ENCODE measurements at regions of chr12 and their contacts with region 1.

Region 1: GRCh38 chr12:31528095-31528494 is 62.8 kb downstream of the DENND5B start:
- DNase-seq: no peak
- ATAC-seq: no peak
- H3K4me3 ChIP-seq: no peak overlapping the region
- H3K27ac ChIP-seq: no peak overlapping the region
- H3K4me1 ChIP-seq: peaks cover 20 to 47% of the 10 kb centered on the region in 2 experiments
- H3K27me3 ChIP-seq: no peaks in the 10 kb centered on the region
- CTCF ChIP-seq: no peak
- POLR2A ChIP-seq: no peak
- RAD21 ChIP-seq: no peak

Region 2: DNA sequence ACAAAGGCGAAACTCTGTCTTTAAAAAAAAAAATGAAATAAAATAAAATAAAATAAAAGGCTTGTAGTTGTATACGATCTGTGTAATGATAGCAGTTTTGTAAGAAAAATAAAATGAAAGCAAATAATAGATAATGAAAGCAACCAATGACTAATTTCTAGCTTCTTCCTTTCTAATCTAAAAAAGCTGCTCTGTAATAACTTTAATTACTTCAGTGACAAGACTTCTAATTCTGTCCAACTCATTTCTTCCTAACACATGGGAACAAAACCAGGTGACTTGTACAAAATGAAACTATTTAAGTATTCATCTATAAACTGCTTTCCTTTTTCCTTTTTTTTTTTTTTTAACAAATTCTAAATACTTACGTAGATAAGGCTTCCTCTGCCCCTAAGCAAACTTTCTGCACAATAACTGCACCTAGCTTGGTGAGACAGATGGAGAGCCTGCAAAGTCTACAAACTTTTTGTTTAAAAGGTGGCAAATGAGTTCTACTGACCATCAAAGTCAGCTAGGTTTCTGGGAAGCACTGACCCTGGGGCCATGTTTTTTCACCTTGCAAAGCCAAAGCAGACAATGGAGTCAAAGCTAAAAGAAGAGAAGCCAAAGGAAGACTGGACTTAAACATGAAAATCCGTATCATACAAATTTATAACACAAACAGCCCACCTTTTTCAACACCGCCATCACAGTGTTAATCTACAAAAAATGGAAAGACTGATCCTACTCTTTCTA is 34.7 kb after region 1 on chr12:
- CTCF ChIA-PET with region 1: no interaction called
- POLR2A ChIA-PET with region 1: no interaction called
- RAD21 ChIA-PET with region 1: no interaction called
- intact Hi-C with region 1: loop called (anchors 2 kb)
- DNase-seq: no peak
- ATAC-seq: no peak
- H3K4me3 ChIP-seq: no peak overlapping the region
- H3K27ac ChIP-seq: no peak overlapping the region
- H3K4me1 ChIP-seq: peaks cover 0 to 9% of the 10 kb centered on the region in 2 experiments; a peak in 2 of 4 replicates
- H3K27me3 ChIP-seq: no peaks in the 10 kb centered on the region
- CTCF ChIP-seq: no peak
- POLR2A ChIP-seq: no peak
- RAD21 ChIP-seq: no peak